ENCODE measurements at regions of chr9 and their contacts with region 1.

Region 1: DNA sequence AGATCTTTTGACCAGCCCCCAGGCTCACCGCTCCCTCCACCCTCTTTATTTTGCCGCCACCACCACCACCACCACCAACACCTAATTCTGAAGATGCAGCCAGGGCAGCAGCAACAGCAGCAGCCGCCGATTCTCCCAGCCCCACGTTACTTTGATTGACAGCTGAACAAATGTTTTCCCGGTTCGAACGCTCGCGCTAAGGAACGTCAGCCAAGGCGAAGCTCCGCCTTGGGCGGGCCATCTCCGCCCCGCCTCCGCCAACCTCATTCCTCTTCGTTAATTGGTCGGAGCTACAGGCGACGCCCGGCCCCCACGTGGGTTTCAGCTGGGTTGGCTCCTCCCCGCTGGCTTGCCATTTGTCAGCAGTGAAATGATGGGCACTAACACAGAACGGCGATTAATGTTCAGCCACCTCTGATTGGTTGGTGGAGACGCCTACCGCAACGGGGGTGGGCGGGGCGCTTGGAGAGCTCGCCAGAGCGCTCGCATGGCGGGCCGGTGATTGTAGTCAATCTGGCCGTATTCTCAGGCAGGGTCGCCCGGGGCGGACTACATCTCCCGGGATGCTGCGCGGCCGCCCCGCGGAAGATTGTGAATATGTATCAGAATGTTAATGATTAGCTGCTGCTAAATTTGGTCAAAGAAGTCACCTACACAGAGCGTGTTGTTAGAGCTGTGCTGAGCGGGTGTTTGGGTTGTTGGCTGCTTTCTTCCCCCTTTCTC is at the start of gene TLE4:
- DNase-seq: peak; percentile 100
- H3K4me3 ChIP-seq: peak within 1 kb of the TSS; percentile 81 to 99 (median 88)
- H3K27ac ChIP-seq: peak within 1 kb of the TSS; percentile 97
- H3K4me1 ChIP-seq: peaks cover 16% of the 10 kb centered on the region
- H3K27me3 ChIP-seq: no peaks in the 10 kb centered on the region
- CTCF ChIP-seq: no peak
- total RNA-seq, gene TLE4: 32.8 to 38.4 TPM

Region 2: GRCh38 chr9:79026316-79026715 is 545.2 kb before region 1 on chr9:
- CTCF ChIA-PET with region 1: no interaction called
- dilution Hi-C with region 1: no loop called
- in situ Hi-C with region 1: no loop called
- intact Hi-C with region 1: loop called (anchors 10 kb)
- DNase-seq: peak; percentile 95
- H3K4me3 ChIP-seq: no peak overlapping the region
- H3K27ac ChIP-seq: peak overlapping the region; percentile 48
- H3K4me1 ChIP-seq: peaks cover 55% of the 10 kb centered on the region
- H3K27me3 ChIP-seq: no peaks in the 10 kb centered on the region
- CTCF ChIP-seq: no peak

Region 3: GRCh38 chr9:79196606-79197005 is 374.9 kb before region 1 on chr9:
- CTCF ChIA-PET with region 1: no interaction called
- dilution Hi-C with region 1: no loop called
- in situ Hi-C with region 1: no loop called
- intact Hi-C with region 1: no loop called
- DNase-seq: no peak
- H3K4me3 ChIP-seq: no peak overlapping the region
- H3K27ac ChIP-seq: no peak overlapping the region
- H3K4me1 ChIP-seq: no peaks in the 10 kb centered on the region
- H3K27me3 ChIP-seq: peaks cover 4% of the 10 kb centered on the region
- CTCF ChIP-seq: no peak

Region 4: GRCh38 chr9:79221084-79221483 is 350.4 kb before region 1 on chr9:
- CTCF ChIA-PET with region 1: no interaction called
- dilution Hi-C with region 1: no loop called
- in situ Hi-C with region 1: no loop called
- intact Hi-C with region 1: loop called (anchors 5 kb)
- DNase-seq: peak; percentile 87
- H3K4me3 ChIP-seq: no peak overlapping the region
- H3K27ac ChIP-seq: peak overlapping the region; percentile 9
- H3K4me1 ChIP-seq: peaks cover 32% of the 10 kb centered on the region
- H3K27me3 ChIP-seq: no peaks in the 10 kb centered on the region
- CTCF ChIP-seq: no peak

Region 5: DNA sequence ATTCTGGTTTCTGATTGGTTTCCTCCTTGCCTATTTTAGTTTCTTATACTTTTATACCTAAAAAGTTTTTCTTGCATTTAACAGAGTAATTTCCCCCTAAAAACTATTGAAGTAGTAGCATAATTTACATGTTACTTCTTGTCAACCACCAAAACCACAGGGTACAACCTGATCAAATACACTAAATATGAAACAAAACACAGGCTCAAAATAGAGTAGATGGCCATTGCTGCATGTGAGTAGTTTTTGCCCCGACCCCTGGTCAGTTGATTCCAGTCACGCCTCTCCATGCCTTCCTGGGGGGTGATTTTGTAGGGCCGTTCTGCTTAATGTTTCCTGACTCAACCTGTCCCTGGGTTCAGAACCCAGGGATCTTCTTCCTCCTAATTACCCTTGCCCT is 102.1 kb after region 1 on chr9:
- CTCF ChIA-PET with region 1: no interaction called
- dilution Hi-C with region 1: no loop called
- in situ Hi-C with region 1: loop called in 1 of 2 experiments (anchors 25 kb)
- intact Hi-C with region 1: loop called (anchors 1 kb)
- DNase-seq: no peak
- H3K4me3 ChIP-seq: no peak overlapping the region
- H3K27ac ChIP-seq: no peak overlapping the region
- H3K4me1 ChIP-seq: peaks cover 38% of the 10 kb centered on the region
- H3K27me3 ChIP-seq: no peaks in the 10 kb centered on the region
- CTCF ChIP-seq: no peak

Region 6: DNA sequence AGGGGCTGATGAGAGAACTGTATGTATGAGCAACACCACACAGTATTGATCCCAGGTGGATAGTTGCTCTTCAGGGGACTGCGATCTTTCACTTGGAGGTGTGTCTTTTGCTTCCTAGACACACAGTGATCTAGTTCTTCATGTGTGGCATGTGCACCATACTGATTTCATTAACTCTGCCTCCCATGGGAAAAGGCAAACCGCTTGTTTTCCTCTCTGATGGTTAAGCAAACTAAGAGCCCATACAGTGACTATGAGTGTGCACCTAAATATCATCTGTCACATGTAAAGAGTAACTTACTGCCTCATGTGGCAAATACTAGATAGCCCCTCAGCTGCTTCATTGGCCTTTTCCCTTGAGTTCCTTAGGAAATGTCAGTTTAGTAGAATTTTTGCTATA is 147.6 kb after region 1 on chr9:
- CTCF ChIA-PET with region 1: no interaction called
- dilution Hi-C with region 1: no loop called
- in situ Hi-C with region 1: no loop called
- intact Hi-C with region 1: loop called (anchors 1 kb)
- DNase-seq: no peak
- H3K4me3 ChIP-seq: no peak overlapping the region
- H3K27ac ChIP-seq: no peak overlapping the region
- H3K4me1 ChIP-seq: no peaks in the 10 kb centered on the region
- H3K27me3 ChIP-seq: no peaks in the 10 kb centered on the region
- CTCF ChIP-seq: no peak

Region 7: GRCh38 chr9:79955300-79955699 is 383.8 kb after region 1 on chr9:
- CTCF ChIA-PET with region 1: no interaction called
- dilution Hi-C with region 1: no loop called
- in situ Hi-C with region 1: no loop called
- intact Hi-C with region 1: loop called (anchors 2 kb)
- DNase-seq: no peak
- H3K4me3 ChIP-seq: no peak overlapping the region
- H3K27ac ChIP-seq: no peak overlapping the region
- H3K4me1 ChIP-seq: no peaks in the 10 kb centered on the region
- H3K27me3 ChIP-seq: no peaks in the 10 kb centered on the region
- CTCF ChIP-seq: peak in 1 of 2 donors; percentile 41